ENCODE measurements at regions of chr5 and their contacts with region 1.

Region 1: GRCh38 chr5:118987988-118988865 is at the start of gene DTWD2:
- DNase-seq: peak; percentile 94
- ATAC-seq: peak; percentile 92
- H3K4me3 Mint-ChIP-seq: peak within 1 kb of the TSS; percentile 77
- H3K27ac Mint-ChIP-seq: peak within 1 kb of the TSS; percentile 80
- H3K4me1 Mint-ChIP-seq: peaks cover 27% of the 10 kb centered on the region
- H3K27me3 Mint-ChIP-seq: no peaks in the 10 kb centered on the region
- CTCF ChIP-seq: peak; percentile 99
- total RNA-seq, gene DTWD2: 5.4 to 6.7 TPM

Region 2: GRCh38 chr5:118933703-118934102 is 54.5 kb before region 1 on chr5:
- CTCF ChIA-PET with region 1: no interaction called
- POLR2A ChIA-PET with region 1: no interaction called
- intact Hi-C with region 1: no loop called
- DNase-seq: no peak
- ATAC-seq: no peak
- H3K4me3 Mint-ChIP-seq: no peak overlapping the region
- H3K27ac Mint-ChIP-seq: no peak overlapping the region
- H3K4me1 Mint-ChIP-seq: no peaks in the 10 kb centered on the region
- H3K27me3 Mint-ChIP-seq: no peaks in the 10 kb centered on the region
- CTCF ChIP-seq: no peak

Region 3: GRCh38 chr5:118960557-118960956 is 27.7 kb before region 1 on chr5:
- CTCF ChIA-PET with region 1: interaction called, 10 read pairs
- POLR2A ChIA-PET with region 1: no interaction called
- intact Hi-C with region 1: no loop called
- DNase-seq: no peak
- ATAC-seq: no peak
- H3K4me3 Mint-ChIP-seq: no peak overlapping the region
- H3K27ac Mint-ChIP-seq: no peak overlapping the region
- H3K4me1 Mint-ChIP-seq: no peaks in the 10 kb centered on the region
- H3K27me3 Mint-ChIP-seq: no peaks in the 10 kb centered on the region
- CTCF ChIP-seq: no peak

Region 4: GRCh38 chr5:119022017-119022745 is 34.0 kb after region 1 on chr5:
- CTCF ChIA-PET with region 1: interaction called, 12 read pairs
- POLR2A ChIA-PET with region 1: interaction called, 3 read pairs
- intact Hi-C with region 1: no loop called
- DNase-seq: no peak
- ATAC-seq: peak; percentile 72
- H3K4me3 Mint-ChIP-seq: no peak overlapping the region
- H3K27ac Mint-ChIP-seq: no peak overlapping the region
- H3K4me1 Mint-ChIP-seq: peaks cover 8% of the 10 kb centered on the region
- H3K27me3 Mint-ChIP-seq: no peaks in the 10 kb centered on the region
- CTCF ChIP-seq: peak; percentile 56

Region 5: DNA sequence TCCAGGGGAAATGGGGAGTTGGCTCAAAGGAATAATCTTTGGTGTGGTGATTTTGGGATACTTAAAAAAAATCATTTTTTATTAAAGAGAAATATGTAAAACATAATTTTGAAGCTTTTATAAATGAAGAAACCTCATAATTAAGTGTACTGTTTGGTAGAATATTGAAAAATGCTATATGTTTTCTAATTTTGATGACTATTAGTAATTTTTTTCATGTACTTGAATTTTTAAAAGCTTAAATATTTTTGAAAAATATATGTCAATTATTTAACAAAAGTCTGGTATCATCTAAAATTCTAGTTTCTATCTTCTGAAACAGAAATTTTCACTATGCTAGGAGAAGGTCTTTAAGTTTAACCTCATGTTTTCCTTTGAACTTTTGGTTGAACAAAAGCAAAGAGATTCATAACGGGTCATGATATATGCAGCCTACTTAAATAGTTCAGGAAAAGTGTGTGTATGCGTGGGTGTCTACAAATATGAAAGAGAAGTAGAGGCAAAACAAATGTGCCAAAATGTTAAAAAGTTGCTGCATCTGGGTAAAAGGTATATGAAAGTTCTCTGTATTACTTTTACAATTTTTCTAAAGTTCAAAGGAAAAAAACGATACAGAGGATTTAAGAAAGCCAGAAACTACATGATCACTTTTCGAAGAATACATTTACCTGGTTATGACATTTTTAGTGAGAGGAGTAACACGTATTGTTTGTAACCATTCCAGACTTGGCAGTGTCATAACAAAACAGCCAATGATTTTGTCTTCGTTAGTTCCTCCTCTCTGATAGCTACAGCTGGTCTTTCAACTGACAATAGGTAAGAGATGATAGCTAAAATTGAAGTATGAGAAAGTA is 250.3 kb after region 1 on chr5:
- CTCF ChIA-PET with region 1: interaction called, 12 read pairs
- POLR2A ChIA-PET with region 1: no interaction called
- intact Hi-C with region 1: no loop called
- DNase-seq: no peak
- ATAC-seq: peak; percentile 85
- H3K4me3 Mint-ChIP-seq: peak overlapping the region; percentile 53
- H3K27ac Mint-ChIP-seq: peak overlapping the region; percentile 82
- H3K4me1 Mint-ChIP-seq: peaks cover 23% of the 10 kb centered on the region
- H3K27me3 Mint-ChIP-seq: no peaks in the 10 kb centered on the region
- CTCF ChIP-seq: no peak

Region 6: DNA sequence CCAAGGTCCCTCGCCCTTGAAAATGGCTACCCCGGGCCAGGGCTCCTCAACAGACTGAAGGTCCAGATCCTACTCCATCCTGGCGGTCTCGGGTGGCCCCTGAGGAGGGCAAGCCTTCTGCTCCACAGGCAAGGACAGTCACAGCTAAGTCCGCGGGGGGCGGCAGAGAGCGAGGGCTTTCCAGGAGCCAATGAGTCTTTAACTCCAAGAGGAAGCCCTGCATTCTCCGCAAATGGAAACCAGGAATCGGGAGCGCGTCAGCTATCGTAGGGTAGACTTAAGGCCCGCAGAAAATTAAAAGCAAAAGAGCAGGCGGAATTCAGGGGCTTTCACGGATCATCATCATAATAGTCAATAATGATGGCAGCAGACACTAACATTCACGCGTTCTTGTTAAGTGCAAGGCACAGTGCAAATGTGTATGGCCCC is 279.7 kb after region 1 on chr5:
- CTCF ChIA-PET with region 1: interaction called, 13 read pairs
- POLR2A ChIA-PET with region 1: no interaction called
- intact Hi-C with region 1: loop called (anchors 5 kb)
- DNase-seq: peak; percentile 97
- ATAC-seq: peak; percentile 80
- H3K4me3 Mint-ChIP-seq: peak overlapping the region; percentile 95
- H3K27ac Mint-ChIP-seq: peak overlapping the region; percentile 96
- H3K4me1 Mint-ChIP-seq: peaks cover 65% of the 10 kb centered on the region
- H3K27me3 Mint-ChIP-seq: no peaks in the 10 kb centered on the region
- CTCF ChIP-seq: peak; percentile 91

Region 7: DNA sequence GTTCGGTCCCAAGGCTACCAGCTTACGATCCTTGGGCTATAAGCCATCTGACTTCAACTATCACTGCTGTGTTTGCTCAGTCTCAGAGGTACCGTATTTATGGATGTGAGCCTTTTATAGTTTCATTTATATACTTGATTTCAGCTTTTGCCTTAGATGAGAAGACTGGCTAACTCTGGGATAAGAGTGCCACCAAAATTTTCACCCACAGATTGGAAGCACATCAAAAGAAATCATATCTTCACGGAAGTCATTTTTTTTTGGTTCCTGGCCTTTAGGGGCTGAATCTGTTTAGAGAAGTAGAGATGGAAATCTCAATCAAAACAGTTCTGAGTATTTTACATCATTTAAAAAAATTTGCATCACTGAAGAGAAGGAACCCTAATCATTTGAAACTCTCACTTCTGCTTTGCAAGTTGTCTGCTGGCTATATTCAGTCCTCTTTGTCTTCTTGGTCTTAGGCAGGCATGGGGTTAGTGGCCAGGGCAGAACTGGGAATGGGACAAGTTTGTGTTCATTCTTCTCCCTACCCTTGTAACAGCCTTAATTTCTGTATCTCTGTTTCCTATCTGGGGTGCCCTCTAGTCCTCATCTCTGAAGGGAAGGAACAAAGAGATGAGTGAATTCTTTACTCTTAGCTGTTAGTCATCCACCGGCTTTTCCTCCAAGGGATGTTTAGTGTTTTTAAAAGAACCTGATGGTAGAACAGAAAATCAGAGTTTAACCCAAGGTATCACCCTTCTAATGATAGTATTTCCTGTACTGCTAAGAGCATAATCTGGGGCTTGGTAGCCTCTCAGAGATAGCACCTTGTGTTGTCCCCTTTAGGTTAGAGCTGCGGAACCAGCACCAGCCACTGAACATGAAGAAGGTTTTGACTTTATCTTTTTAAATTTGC is 353.5 kb after region 1 on chr5:
- CTCF ChIA-PET with region 1: no interaction called
- POLR2A ChIA-PET with region 1: no interaction called
- intact Hi-C with region 1: no loop called
- DNase-seq: peak; percentile 43
- ATAC-seq: peak; percentile 42
- H3K4me3 Mint-ChIP-seq: peak overlapping the region; percentile 73
- H3K27ac Mint-ChIP-seq: peak overlapping the region; percentile 95
- H3K4me1 Mint-ChIP-seq: peaks cover 95% of the 10 kb centered on the region
- H3K27me3 Mint-ChIP-seq: no peaks in the 10 kb centered on the region
- CTCF ChIP-seq: no peak

Region 8: DNA sequence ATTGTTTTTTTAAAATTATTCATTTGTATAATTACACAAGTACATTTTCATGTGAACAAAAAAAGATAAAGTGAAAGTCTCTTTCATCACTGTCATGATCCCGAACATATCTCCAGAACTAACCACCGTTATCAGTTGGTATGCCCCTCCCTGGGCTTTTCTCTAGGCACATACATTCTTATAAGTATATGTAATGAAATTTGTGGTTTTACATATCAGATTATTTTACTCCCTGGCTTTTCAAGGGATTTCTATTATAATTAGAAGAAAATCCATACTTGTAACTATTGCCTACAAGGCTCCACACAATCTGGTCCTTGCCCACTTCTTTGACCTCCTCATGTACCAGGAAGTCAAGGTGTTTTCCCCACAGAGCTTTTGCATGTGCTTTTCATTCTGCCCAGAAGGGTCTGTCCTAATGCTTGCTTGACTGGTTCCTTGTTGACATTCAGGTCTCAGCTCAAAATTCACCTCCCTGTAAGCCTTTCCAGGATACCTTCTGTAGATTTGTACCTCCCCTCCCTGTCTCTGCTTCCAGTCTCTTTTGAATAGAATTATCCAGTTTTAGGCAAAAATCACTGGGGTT is 430.4 kb after region 1 on chr5:
- CTCF ChIA-PET with region 1: interaction called, 95 read pairs
- POLR2A ChIA-PET with region 1: no interaction called
- intact Hi-C with region 1: no loop called
- DNase-seq: no peak
- ATAC-seq: peak; percentile 58
- H3K4me3 Mint-ChIP-seq: no peak overlapping the region
- H3K27ac Mint-ChIP-seq: no peak overlapping the region
- H3K4me1 Mint-ChIP-seq: peaks cover 20% of the 10 kb centered on the region
- H3K27me3 Mint-ChIP-seq: no peaks in the 10 kb centered on the region
- CTCF ChIP-seq: no peak

Region 9: GRCh38 chr5:119452373-119453039 is 464.3 kb after region 1 on chr5 and contains the start of gene HSD17B4:
- CTCF ChIA-PET with region 1: interaction called, 14 read pairs
- POLR2A ChIA-PET with region 1: interaction called, 3 read pairs
- intact Hi-C with region 1: no loop called
- DNase-seq: peak; percentile 91
- ATAC-seq: peak; percentile 96
- H3K4me3 Mint-ChIP-seq: peak within 1 kb of the TSS; percentile 85
- H3K27ac Mint-ChIP-seq: peak within 1 kb of the TSS; percentile 83
- H3K4me1 Mint-ChIP-seq: peaks cover 21% of the 10 kb centered on the region
- H3K27me3 Mint-ChIP-seq: no peaks in the 10 kb centered on the region
- CTCF ChIP-seq: no peak
- total RNA-seq, gene HSD17B4: 94.3 to 111 TPM

Measured in activated CD8-positive, alpha-beta T cell treated with anti-CD3 and anti-CD28 coated beads for 36 hours (primary cell).